B cell (primary cell): ENCODE measurements at regions of chr15 and their contacts with region 1.

Region 1: GRCh38 chr15:63818191-63818590 is 15.6 kb downstream of the HERC1 start:
- DNase-seq: no peak
- ATAC-seq: no peak
- H3K4me3 ChIP-seq: no peak overlapping the region
- H3K4me3 Mint-ChIP-seq: no peak overlapping the region
- H3K27ac ChIP-seq: no peak overlapping the region
- H3K27ac Mint-ChIP-seq: no peak overlapping the region
- H3K4me1 ChIP-seq: peaks cover 27 to 44% of the 10 kb centered on the region in 2 donors
- H3K4me1 Mint-ChIP-seq: peaks cover 67% of the 10 kb centered on the region
- H3K27me3 ChIP-seq: no peaks in the 10 kb centered on the region
- H3K27me3 Mint-ChIP-seq: no peaks in the 10 kb centered on the region
- CTCF ChIP-seq: no peak

Region 2: GRCh38 chr15:63791228-63791627 is 27.0 kb before region 1 on chr15:
- CTCF ChIA-PET with region 1: no interaction called
- POLR2A ChIA-PET with region 1: no interaction called
- intact Hi-C with region 1: loop called (anchors 1 kb)
- DNase-seq: no peak
- ATAC-seq: no peak
- H3K4me3 ChIP-seq: no peak overlapping the region
- H3K4me3 Mint-ChIP-seq: no peak overlapping the region
- H3K27ac ChIP-seq: no peak overlapping the region
- H3K27ac Mint-ChIP-seq: no peak overlapping the region
- H3K4me1 ChIP-seq: no peaks in the 10 kb centered on the region
- H3K4me1 Mint-ChIP-seq: peaks cover 33% of the 10 kb centered on the region
- H3K27me3 ChIP-seq: no peaks in the 10 kb centered on the region
- H3K27me3 Mint-ChIP-seq: no peaks in the 10 kb centered on the region
- CTCF ChIP-seq: no peak